CD8-positive, alpha-beta memory T cell (primary cell): ENCODE measurements at regions of chr16 and their contacts with region 1.

Region 1: DNA sequence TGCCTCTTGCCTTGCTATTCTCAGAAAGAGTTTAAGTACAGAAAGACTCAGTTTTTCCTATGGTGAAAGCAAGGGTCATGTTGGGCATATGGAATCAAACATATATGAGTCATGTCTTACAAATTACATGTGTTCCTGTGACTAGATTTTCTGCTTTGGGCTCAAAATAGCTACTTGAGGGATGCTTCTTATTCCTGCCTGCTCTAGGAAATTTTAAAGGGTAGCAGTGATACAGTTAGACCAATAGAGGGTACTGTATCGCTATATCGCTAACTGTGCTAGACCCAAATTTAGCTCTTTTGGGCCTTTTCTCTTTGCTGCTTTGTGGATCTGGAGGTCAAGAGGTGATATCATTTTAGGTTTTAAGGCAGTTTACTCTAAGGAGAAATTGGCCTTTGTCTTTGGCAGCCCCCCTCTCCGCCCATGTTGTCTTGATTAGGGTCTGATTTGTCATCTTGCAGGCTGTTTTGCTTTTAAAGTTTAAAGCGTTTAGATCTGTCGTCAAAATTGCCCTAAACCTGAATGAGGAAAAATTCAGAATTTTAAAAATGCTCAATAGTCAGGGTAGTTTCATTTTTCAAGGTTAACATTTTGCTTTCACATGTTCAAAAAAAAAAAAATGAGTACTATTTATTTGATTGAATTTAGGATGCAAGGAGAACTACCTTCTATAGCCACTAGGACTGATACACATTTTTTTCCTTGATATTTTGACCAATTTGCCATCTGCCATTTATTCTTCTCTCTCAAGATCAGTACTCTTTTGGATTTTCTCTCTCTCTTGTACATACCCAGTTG is 8.8 kb downstream of the NFATC3 start:
- DNase-seq: peak in 2 of 5 donors; percentile 30 to 48
- H3K4me3 ChIP-seq: no peak overlapping the region
- H3K4me3 Mint-ChIP-seq: peak overlapping the region in 6 of 7 donors; percentile 29 to 63 (median 44)
- H3K27ac ChIP-seq: no peak overlapping the region
- H3K27ac Mint-ChIP-seq: peak overlapping the region; percentile 30 to 91 (median 82)
- H3K4me1 ChIP-seq: peaks cover 88% of the 10 kb centered on the region
- H3K4me1 Mint-ChIP-seq: peaks cover 85 to 95% (median 93%) of the 10 kb centered on the region in 3 donors
- H3K27me3 ChIP-seq: no peaks in the 10 kb centered on the region
- H3K27me3 Mint-ChIP-seq: no peaks in the 10 kb centered on the region

Region 2: DNA sequence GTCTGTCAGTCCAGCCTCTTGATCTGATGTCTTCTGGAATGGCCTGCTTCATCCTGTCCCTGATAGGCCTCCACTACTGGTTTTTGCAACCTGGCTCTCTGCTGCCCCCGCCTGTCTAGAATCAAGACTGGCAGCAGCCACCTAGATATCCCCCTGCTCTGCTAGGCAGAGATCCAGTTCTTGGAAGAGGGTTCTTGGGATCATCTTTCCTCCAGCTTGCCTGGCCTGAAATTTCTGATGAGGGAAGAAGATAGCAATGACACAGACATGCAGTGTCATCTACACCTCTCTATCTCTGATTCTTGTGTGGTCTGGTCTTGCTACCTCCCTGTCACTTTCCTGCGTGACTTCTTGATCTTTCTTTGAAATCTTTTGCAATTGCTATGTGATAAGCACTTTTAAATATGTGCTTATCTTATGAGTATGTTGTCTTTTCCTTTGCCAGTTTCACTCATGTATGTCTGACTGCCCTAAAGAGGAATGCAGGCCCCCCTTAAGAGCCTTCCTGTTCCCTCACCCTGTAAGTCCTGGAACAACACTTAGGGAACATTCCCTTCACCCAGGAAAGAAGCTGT is 29.1 kb before region 1 on chr16:
- CTCF ChIA-PET with region 1: interaction called, 22 read pairs
- POLR2A ChIA-PET with region 1: no interaction called
- DNase-seq: peak; percentile 56 to 78 (median 62)
- H3K4me3 ChIP-seq: no peak overlapping the region
- H3K4me3 Mint-ChIP-seq: peak overlapping the region; percentile 1 to 88 (median 63)
- H3K27ac ChIP-seq: peak overlapping the region; percentile 12
- H3K27ac Mint-ChIP-seq: peak overlapping the region; percentile 70 to 93 (median 88)
- H3K4me1 ChIP-seq: peaks cover 82% of the 10 kb centered on the region
- H3K4me1 Mint-ChIP-seq: peaks cover 74 to 89% (median 87%) of the 10 kb centered on the region in 3 donors
- H3K27me3 ChIP-seq: no peaks in the 10 kb centered on the region
- H3K27me3 Mint-ChIP-seq: no peaks in the 10 kb centered on the region

Region 3: GRCh38 chr16:68074850-68075555 is 19.0 kb before region 1 on chr16:
- CTCF ChIA-PET with region 1: interaction called, 11 read pairs
- POLR2A ChIA-PET with region 1: no interaction called
- DNase-seq: peak; percentile 53 to 87 (median 69)
- H3K4me3 ChIP-seq: peak overlapping the region; percentile 40
- H3K4me3 Mint-ChIP-seq: peak overlapping the region; percentile 51 to 91 (median 82)
- H3K27ac ChIP-seq: no peak overlapping the region
- H3K27ac Mint-ChIP-seq: peak overlapping the region; percentile 81 to 99 (median 94)
- H3K4me1 ChIP-seq: peaks cover 85% of the 10 kb centered on the region
- H3K4me1 Mint-ChIP-seq: peaks cover 88 to 90% (median 90%) of the 10 kb centered on the region in 3 donors
- H3K27me3 ChIP-seq: no peaks in the 10 kb centered on the region
- H3K27me3 Mint-ChIP-seq: no peaks in the 10 kb centered on the region

Region 4: DNA sequence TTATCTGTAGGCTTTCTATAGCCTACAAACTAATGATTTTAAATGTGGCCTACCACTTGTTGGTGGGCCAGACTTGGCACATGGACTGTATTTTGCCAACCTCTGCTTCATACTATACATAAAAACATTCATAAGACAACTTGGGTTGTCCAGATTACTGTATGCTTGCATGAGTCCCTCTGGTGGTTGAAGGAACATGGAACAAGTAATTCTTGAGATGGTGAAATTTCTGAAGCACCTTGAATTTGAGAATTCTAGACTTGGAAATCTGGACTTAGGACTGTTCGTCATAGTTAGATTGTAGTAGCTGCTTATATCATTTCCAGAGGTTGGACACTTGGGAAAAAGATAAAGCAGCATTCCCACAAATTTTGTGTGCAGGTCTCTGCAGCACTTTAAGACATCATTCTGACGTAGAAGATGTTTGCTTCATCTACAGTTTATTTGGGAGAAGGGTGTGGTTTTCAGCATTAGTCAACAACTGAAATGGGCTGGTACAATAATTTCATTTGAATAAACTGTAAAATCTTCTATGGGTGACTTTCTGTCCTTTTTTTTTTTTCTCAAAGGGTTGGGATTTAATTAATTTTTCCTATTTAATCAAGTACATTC is 22.3 kb after region 1 on chr16:
- CTCF ChIA-PET with region 1: interaction called, 11 read pairs
- POLR2A ChIA-PET with region 1: no interaction called
- DNase-seq: peak in 2 of 5 donors; percentile 16 to 19
- H3K4me3 ChIP-seq: no peak overlapping the region
- H3K4me3 Mint-ChIP-seq: peak overlapping the region in 5 of 7 donors; percentile 11 to 47 (median 19)
- H3K27ac ChIP-seq: no peak overlapping the region
- H3K27ac Mint-ChIP-seq: peak overlapping the region in 5 of 8 donors; percentile 10 to 68 (median 55)
- H3K4me1 ChIP-seq: peaks cover 90% of the 10 kb centered on the region
- H3K4me1 Mint-ChIP-seq: peaks cover 83 to 96% (median 92%) of the 10 kb centered on the region in 3 donors
- H3K27me3 ChIP-seq: no peaks in the 10 kb centered on the region
- H3K27me3 Mint-ChIP-seq: no peaks in the 10 kb centered on the region

Region 5: GRCh38 chr16:68229431-68230198 is 135.6 kb after region 1 on chr16:
- CTCF ChIA-PET with region 1: interaction called, 11 read pairs
- POLR2A ChIA-PET with region 1: interaction called, 7 read pairs
- DNase-seq: peak in 4 of 5 donors; percentile 40 to 61 (median 48)
- H3K4me3 ChIP-seq: no peak overlapping the region
- H3K4me3 Mint-ChIP-seq: peak overlapping the region in 1 of 7 donors; percentile 27
- H3K27ac ChIP-seq: no peak overlapping the region
- H3K27ac Mint-ChIP-seq: peak overlapping the region; percentile 32 to 93 (median 74)
- H3K4me1 ChIP-seq: peaks cover 32% of the 10 kb centered on the region
- H3K4me1 Mint-ChIP-seq: peaks cover 26 to 45% (median 42%) of the 10 kb centered on the region in 3 donors
- H3K27me3 ChIP-seq: no peaks in the 10 kb centered on the region
- H3K27me3 Mint-ChIP-seq: peaks cover 0 to 4% of the 10 kb centered on the region in 2 donors